ENCODE measurements at regions of chr3 and their contacts with region 1.

Region 1: DNA sequence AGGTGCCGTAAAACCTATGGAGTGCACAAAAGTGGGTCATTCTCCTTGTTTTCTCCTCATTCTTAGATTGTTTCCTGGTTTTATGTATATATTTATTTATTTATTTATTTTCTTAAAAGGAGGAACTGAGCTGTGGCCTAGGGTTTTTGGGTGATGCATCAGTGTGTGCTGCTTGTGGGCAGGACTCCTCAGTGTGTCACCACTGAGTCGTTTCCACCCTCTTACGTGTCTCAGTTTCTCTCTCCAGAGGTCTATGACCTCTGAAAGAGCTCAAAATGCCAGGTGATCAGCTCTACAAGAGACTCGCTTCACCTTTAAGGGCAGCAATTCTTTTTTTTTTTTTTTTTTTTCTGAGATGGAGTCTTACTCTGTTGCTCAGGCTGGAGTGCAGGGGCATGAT is 72.9 kb downstream of the CD200 start:
- DNase-seq: no peak
- ATAC-seq: peak; percentile 72
- H3K4me3 ChIP-seq: no peak overlapping the region
- H3K27ac ChIP-seq: no peak overlapping the region; the same call in 1 of the 2 replicates
- H3K4me1 ChIP-seq: peaks cover 27% of the 10 kb centered on the region
- H3K27me3 ChIP-seq: no peaks in the 10 kb centered on the region
- CTCF ChIP-seq: no peak
- EP300 ChIP-seq: no peak
- POLR2A ChIP-seq: no peak
- RAD21 ChIP-seq: no peak

Region 2: GRCh38 chr3:112117841-112118571 is 287.8 kb before region 1 on chr3:
- CTCF ChIA-PET with region 1: no interaction called
- POLR2A ChIA-PET with region 1: interaction called, 3 read pairs
- RAD21 ChIA-PET with region 1: interaction called, 5 read pairs
- SMC1A ChIA-PET with region 1: interaction called, 3 read pairs
- in situ Hi-C with region 1: no loop called
- intact Hi-C with region 1: loop called (anchors 2 kb)
- DNase-seq: no peak
- ATAC-seq: peak; percentile 48
- H3K4me3 ChIP-seq: peak overlapping the region; percentile 48; the same call in 1 of the 2 replicates
- H3K27ac ChIP-seq: peak overlapping the region; percentile 95
- H3K4me1 ChIP-seq: peaks cover 92% of the 10 kb centered on the region
- H3K27me3 ChIP-seq: no peaks in the 10 kb centered on the region
- CTCF ChIP-seq: peak; percentile 32 to 34 (median 33); a peak in 5 of 6 replicates
- EP300 ChIP-seq: no peak
- POLR2A ChIP-seq: peak; percentile 47; the same call in 1 of the 2 replicates
- RAD21 ChIP-seq: peak; percentile 43

Region 3: GRCh38 chr3:112350181-112350825 is 55.5 kb before region 1 on chr3:
- CTCF ChIA-PET with region 1: interaction called, 4 read pairs
- POLR2A ChIA-PET with region 1: interaction called, 6 read pairs
- RAD21 ChIA-PET with region 1: interaction called, 4 read pairs
- SMC1A ChIA-PET with region 1: interaction called, 14 read pairs
- in situ Hi-C with region 1: no loop called
- intact Hi-C with region 1: no loop called
- DNase-seq: no peak
- ATAC-seq: no peak
- H3K4me3 ChIP-seq: no peak overlapping the region
- H3K27ac ChIP-seq: no peak overlapping the region
- H3K4me1 ChIP-seq: peaks cover 9% of the 10 kb centered on the region
- H3K27me3 ChIP-seq: no peaks in the 10 kb centered on the region
- CTCF ChIP-seq: no peak
- EP300 ChIP-seq: no peak
- POLR2A ChIP-seq: no peak
- RAD21 ChIP-seq: no peak

Region 4: DNA sequence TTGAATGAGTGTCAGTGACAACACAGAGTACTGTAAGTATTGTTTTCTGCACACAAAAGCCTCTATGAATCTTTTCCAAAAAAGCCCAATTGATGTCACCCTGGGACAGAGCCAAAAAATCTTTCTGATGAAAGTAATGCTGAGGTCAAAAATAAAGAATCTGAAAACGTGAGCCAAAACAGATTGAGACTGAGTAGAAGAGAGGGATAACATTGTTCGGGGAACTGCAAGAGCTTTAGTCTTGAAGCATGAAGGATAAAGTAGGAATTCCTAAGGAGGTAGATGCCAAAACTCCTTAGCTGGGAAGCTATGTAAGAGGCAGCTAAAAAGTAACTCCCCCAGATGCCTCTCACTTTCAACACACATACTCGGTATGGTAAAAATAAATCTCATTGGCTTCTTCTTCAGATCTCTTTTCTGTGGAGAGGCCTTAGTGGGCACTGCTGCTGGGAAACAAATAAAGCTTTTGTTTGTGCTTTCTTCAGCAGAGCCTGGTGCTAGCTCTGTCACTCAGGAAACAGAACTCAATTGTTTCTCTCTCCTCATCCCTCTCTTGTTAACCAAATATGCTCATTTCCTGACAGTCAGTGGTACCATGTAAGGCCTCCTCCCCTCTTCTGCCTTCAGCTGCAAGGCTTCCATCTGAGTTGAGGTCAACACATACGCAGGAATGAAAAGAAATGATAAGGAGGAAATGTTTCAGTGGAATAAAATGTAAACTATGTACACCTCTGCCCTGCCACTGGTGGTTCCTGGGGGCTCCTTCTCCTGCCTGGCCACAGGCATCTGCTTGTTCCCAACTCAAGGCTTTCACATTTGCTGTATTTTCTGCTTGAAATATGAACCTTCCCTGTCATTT is 14.8 kb before region 1 on chr3:
- CTCF ChIA-PET with region 1: interaction called, 7 read pairs
- POLR2A ChIA-PET with region 1: interaction called, 6 read pairs
- RAD21 ChIA-PET with region 1: interaction called, 17 read pairs
- SMC1A ChIA-PET with region 1: interaction called, 18 read pairs
- in situ Hi-C with region 1: no loop called
- intact Hi-C with region 1: no loop called
- DNase-seq: no peak
- ATAC-seq: peak; percentile 71
- H3K4me3 ChIP-seq: no peak overlapping the region
- H3K27ac ChIP-seq: 0 out of 2 replicates have a peak overlapping the region, but pooled peaks have one; percentile 1
- H3K4me1 ChIP-seq: peaks cover 6% of the 10 kb centered on the region; the same call in 1 of the 2 replicates
- H3K27me3 ChIP-seq: no peaks in the 10 kb centered on the region
- CTCF ChIP-seq: no peak
- EP300 ChIP-seq: no peak
- POLR2A ChIP-seq: no peak
- RAD21 ChIP-seq: no peak

Region 5: GRCh38 chr3:112464264-112464663 is 58.4 kb after region 1 on chr3:
- CTCF ChIA-PET with region 1: interaction called, 3 read pairs
- POLR2A ChIA-PET with region 1: interaction called, 7 read pairs
- RAD21 ChIA-PET with region 1: interaction called, 15 read pairs
- SMC1A ChIA-PET with region 1: interaction called, 46 read pairs
- in situ Hi-C with region 1: no loop called
- intact Hi-C with region 1: loop called (anchors 1 kb)
- DNase-seq: peak; percentile 67
- ATAC-seq: peak; percentile 45
- H3K4me3 ChIP-seq: peak overlapping the region; percentile 16; the same call in 1 of the 2 replicates
- H3K27ac ChIP-seq: peak overlapping the region; percentile 77
- H3K4me1 ChIP-seq: peaks cover 61% of the 10 kb centered on the region
- H3K27me3 ChIP-seq: no peaks in the 10 kb centered on the region
- CTCF ChIP-seq: no peak
- EP300 ChIP-seq: peak; percentile 10 to 78; a peak in 2 of 4 replicates
- POLR2A ChIP-seq: no peak
- RAD21 ChIP-seq: no peak

Region 6: GRCh38 chr3:112498914-112499711 is 93.3 kb after region 1 on chr3 and contains the start of gene BTLA:
- CTCF ChIA-PET with region 1: no interaction called
- POLR2A ChIA-PET with region 1: no interaction called
- RAD21 ChIA-PET with region 1: interaction called, 4 read pairs
- SMC1A ChIA-PET with region 1: interaction called, 13 read pairs
- in situ Hi-C with region 1: no loop called
- intact Hi-C with region 1: no loop called
- DNase-seq: peak; percentile 79
- ATAC-seq: peak; percentile 64
- H3K4me3 ChIP-seq: peak within 1 kb of the TSS; percentile 89
- H3K27ac ChIP-seq: peak within 1 kb of the TSS; percentile 87
- H3K4me1 ChIP-seq: peaks cover 13% of the 10 kb centered on the region
- H3K27me3 ChIP-seq: no peaks in the 10 kb centered on the region
- CTCF ChIP-seq: no peak
- EP300 ChIP-seq: peak in 1 of 2 experiments; percentile 39; a peak in 1 of 4 replicates
- POLR2A ChIP-seq: peak; percentile 52; the same call in 1 of the 2 replicates
- RAD21 ChIP-seq: no peak
- polyA plus RNA-seq, gene BTLA: 101 to 134 TPM

Region 7: DNA sequence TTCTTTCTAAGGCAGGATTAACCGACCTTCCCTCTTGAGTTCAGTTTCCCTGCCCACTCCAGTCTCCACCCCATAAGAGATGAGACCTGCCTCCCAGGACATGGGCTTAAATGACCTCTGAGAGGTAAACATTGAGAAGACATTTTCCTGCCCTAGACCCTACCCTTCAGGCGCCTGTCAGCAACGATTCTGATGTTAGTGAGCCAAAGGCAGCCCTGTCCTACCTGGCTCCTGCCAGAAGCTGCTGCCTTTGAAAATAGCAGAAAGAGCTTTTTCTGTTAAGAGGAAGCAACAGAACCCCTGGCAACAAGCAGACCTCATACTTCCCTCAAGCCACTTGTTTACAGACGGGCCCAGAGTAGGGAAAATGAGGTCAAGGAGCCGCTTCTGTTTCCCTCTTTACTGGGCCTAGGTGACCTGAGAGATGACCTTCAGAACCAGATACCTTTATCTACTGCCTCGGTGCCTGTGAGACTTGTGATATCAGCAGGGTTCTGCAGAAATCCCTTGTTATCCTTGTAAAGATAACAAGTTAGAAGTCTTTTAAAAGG is 388.9 kb after region 1 on chr3:
- CTCF ChIA-PET with region 1: no interaction called
- POLR2A ChIA-PET with region 1: no interaction called
- RAD21 ChIA-PET with region 1: no interaction called
- SMC1A ChIA-PET with region 1: no interaction called
- in situ Hi-C with region 1: no loop called
- intact Hi-C with region 1: no loop called
- DNase-seq: no peak
- ATAC-seq: no peak
- H3K4me3 ChIP-seq: no peak overlapping the region
- H3K27ac ChIP-seq: no peak overlapping the region
- H3K4me1 ChIP-seq: no peaks in the 10 kb centered on the region
- H3K27me3 ChIP-seq: no peaks in the 10 kb centered on the region; a peak in 2 of 4 replicates
- CTCF ChIP-seq: no peak
- EP300 ChIP-seq: no peak
- POLR2A ChIP-seq: no peak
- RAD21 ChIP-seq: no peak

Measured in GM12878 (cell line).